Activated naive CD4-positive, alpha-beta T cell treated with anti-CD3 and anti-CD28 coated beads for 36 hours (primary cell): ENCODE measurements at regions of chr15 and their contacts with region 1.

Region 1: GRCh38 chr15:38563723-38564519 is 693 bp downstream of the RASGRP1 start:
- DNase-seq: peak; percentile 88
- H3K4me3 Mint-ChIP-seq: peak overlapping the region; percentile 96
- H3K27ac Mint-ChIP-seq: peak overlapping the region; percentile 98
- H3K4me1 Mint-ChIP-seq: peaks cover 55% of the 10 kb centered on the region
- H3K27me3 Mint-ChIP-seq: no peaks in the 10 kb centered on the region

Region 2: GRCh38 chr15:38474155-38474757 is 89.7 kb before region 1 on chr15:
- CTCF ChIA-PET with region 1: interaction called, 9 read pairs
- intact Hi-C with region 1: loop called (anchors 1 kb)
- DNase-seq: peak; percentile 30
- H3K4me3 Mint-ChIP-seq: no peak overlapping the region
- H3K27ac Mint-ChIP-seq: peak overlapping the region; percentile 55
- H3K4me1 Mint-ChIP-seq: peaks cover 4% of the 10 kb centered on the region
- H3K27me3 Mint-ChIP-seq: no peaks in the 10 kb centered on the region

Region 3: DNA sequence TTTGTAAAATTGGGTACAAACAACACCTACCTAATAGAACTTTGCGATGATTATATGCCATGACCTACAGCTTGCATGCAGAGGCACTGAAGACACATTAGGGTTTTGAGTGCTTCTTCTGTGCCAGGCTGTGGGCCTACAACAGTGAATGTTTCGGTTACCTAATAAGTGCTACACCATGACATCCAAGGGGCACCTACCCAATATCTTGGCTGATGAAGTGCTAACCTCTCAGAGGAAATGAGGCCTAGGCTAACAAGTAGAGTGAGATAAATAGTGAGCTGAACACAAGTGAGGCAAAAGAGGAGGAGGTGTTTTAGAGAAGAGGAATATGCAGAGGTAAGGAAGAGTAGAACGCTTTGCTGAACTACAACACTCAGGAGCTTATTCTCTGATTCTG is 12.9 kb after region 1 on chr15:
- CTCF ChIA-PET with region 1: interaction called, 4 read pairs
- intact Hi-C with region 1: loop called (anchors 1 kb)
- DNase-seq: no peak
- H3K4me3 Mint-ChIP-seq: no peak overlapping the region
- H3K27ac Mint-ChIP-seq: no peak overlapping the region
- H3K4me1 Mint-ChIP-seq: peaks cover 29% of the 10 kb centered on the region
- H3K27me3 Mint-ChIP-seq: no peaks in the 10 kb centered on the region

Region 4: DNA sequence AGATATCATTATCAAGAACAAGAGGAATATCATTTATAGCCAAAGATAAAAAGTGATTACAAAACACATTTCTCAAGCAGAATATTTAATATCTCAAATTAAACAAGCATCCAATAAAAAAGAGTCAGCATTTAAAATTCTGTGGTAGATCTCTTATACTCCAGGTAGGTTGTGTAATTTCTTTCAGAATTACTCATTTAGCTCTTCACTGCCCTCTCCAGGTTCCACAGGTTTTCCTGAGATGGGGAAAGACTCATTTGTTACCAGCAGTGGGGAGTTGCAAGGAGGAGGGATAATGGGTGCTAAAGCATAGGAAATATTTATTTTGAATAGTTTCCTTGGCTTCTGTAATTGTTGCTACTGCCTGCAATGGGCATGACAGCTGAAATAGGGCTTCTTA is 83.8 kb after region 1 on chr15:
- CTCF ChIA-PET with region 1: interaction called, 44 read pairs
- intact Hi-C with region 1: loop called (anchors 1 kb)
- DNase-seq: no peak
- H3K4me3 Mint-ChIP-seq: no peak overlapping the region
- H3K27ac Mint-ChIP-seq: no peak overlapping the region
- H3K4me1 Mint-ChIP-seq: peaks cover 68% of the 10 kb centered on the region
- H3K27me3 Mint-ChIP-seq: no peaks in the 10 kb centered on the region

Region 5: GRCh38 chr15:38683382-38684242 is 119.7 kb after region 1 on chr15:
- CTCF ChIA-PET with region 1: interaction called, 352 read pairs
- intact Hi-C with region 1: loop called (anchors 1 kb)
- DNase-seq: peak; percentile 89
- H3K4me3 Mint-ChIP-seq: no peak overlapping the region
- H3K27ac Mint-ChIP-seq: peak overlapping the region; percentile 38
- H3K4me1 Mint-ChIP-seq: peaks cover 66% of the 10 kb centered on the region
- H3K27me3 Mint-ChIP-seq: no peaks in the 10 kb centered on the region

Region 6: DNA sequence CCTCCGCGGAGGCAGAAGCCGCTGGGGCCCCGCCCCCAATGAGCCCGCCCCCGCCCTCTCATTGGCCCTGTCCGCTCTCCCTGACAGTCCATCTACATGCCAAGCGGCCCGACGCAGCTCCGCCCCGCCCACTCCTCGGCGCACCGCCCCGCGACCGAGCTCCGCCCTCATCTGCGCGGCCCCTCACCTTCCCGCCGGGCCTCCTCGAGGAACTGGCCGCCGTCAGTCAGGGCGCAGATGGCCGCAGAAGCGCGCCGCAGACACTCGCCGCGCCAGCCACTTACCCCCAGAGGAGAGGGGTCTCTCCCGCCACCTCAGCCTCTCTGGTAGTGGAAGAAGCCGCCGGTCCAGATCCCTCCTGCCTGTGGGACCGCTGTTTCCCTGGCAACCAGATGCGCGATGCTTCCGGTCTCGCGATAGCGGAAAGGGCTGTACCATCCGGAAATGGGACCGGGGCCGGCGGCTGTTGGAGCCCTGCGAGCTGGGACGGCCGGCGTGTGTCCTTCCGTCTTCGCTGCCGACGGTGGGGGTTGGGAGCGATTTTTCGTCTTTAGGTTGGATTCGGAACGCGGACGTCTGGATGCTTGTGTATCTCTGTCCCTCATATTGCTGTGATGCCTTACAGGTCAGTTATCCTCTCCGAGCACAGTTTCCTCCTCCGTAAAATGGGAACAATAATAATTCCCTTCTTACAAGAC is 1218.7 kb after region 1 on chr15 and contains the start of gene FSIP1:
- CTCF ChIA-PET with region 1: no interaction called
- intact Hi-C with region 1: loop called (anchors 10 kb)
- DNase-seq: peak; percentile 98
- H3K4me3 Mint-ChIP-seq: peak within 1 kb of the TSS; percentile 77
- H3K27ac Mint-ChIP-seq: peak within 1 kb of the TSS; percentile 64
- H3K4me1 Mint-ChIP-seq: peaks cover 43% of the 10 kb centered on the region
- H3K27me3 Mint-ChIP-seq: no peaks in the 10 kb centered on the region
- total RNA-seq, gene FSIP1: 0.21 to 0.27 TPM